Right ventricle myocardium inferior (tissue), 1 donor: ENCODE measurements at regions of chr21 and their contacts with region 1.

Region 1: DNA sequence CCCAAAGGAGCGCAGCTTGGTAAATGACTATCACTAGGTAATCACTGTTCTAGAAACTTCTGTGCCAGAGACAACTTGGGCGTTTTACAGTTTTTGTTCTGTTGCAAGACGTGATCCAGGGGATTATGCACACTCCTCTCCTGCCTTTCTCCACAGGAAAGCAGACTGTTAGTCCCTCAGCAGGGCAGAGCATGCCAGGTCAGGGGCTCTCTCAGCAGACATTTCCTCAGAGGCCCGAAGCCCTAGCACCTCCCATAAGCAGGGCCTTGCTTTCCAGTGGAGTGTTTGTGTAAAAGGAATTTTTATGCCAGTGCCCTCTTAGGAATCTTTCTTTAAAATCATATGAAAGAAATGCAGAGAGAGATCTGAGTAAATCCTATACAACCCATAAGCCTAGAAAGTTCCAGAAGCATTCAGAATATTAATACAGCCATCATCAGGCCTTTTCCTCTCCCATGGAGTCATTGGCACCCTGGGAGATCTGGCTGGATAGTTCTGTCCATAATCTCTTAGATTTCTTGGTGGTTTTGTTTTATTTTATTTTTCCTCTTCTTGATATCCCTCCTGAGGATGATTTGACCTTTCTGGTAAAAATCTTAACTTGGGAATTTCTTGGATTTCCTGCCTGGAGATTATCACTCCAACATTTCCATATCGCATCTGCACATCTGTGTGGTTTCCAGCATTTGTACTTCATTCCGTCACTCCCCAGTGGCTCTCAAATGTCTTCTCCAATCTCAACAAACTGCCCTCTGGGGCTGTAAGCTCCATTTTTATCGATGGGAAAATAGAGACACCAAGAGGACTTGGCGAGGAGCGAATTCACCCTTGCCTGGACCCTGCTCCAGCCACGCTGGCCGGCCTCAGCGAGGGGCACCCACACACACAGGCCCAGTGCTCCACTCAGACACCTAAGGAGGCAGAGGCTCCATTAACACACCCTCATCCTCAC is 116.1 kb downstream of the PSMG1 start:
- DNase-seq: no peak
- ATAC-seq: peak; percentile 57

Region 2: DNA sequence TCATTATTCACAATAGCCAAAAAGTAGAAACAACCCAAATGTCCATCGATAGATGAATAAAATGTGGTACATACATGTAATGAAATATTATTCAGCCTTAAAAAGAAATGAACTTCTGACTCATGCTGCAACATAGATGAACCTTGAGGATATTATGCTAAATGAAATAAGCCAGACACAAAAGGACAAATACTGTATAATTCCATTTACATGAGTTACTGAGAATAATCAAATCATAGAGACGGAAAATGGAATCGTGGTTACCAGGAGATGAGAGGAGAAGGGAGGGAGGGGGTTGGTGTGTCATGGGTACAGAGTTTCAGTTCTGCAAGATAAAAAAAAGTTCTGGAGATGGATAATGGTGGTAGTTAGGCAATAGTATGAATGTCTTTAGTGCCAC is 67.9 kb before region 1 on chr21:
- intact Hi-C with region 1: loop called (anchors 5 kb)
- DNase-seq: no peak
- ATAC-seq: no peak

Region 3: GRCh38 chr21:39125752-39126485 is 58.8 kb after region 1 on chr21:
- intact Hi-C with region 1: loop called (anchors 10 kb)
- DNase-seq: peak; percentile 60
- ATAC-seq: peak; percentile 94

Region 4: GRCh38 chr21:39263372-39263771 is 196.3 kb after region 1 on chr21:
- intact Hi-C with region 1: no loop called
- DNase-seq: no peak
- ATAC-seq: no peak